Aorta (tissue), 5 donors: ENCODE measurements at regions of chr5 and their contacts with region 1.

Region 1: DNA sequence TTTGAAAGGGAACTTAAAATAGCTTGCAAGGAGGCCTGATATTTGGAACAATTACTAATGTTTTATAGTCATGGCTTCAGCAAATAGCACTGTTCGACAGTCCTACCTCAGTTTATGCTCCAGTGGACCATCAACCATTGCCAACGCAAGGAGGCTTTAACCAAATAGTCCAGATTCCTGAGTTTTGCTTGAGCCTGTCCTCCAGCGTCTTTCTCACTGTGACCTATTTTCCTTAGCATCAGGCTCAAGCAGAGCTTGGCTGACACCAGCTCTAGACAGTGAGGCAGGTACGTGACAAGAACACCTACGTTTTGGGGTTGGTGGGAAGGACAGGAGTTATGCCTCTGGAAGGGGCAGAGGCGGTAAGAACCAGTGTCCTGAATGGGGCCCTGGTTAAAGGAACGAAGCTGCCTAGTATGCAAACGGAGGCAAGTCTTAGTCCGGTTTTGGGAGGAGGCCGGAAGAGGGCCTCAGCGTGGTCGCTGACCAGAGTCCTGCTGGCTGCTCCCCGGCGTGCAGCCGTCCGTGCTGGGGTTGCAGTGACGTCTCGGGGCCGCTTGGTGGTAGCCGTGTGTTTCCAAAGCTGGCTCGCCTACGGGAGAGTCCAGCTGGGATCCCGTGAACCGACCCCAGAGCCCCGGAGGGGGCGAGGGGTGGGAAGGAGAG is 998 bp upstream of the FGF18 start:
- DNase-seq: peak; percentile 87 to 94
- ATAC-seq: peak; percentile 93
- H3K4me3 ChIP-seq: no peak overlapping the region
- H3K27ac ChIP-seq: no peak overlapping the region
- H3K4me1 ChIP-seq: no peaks in the 10 kb centered on the region
- H3K27me3 ChIP-seq: no peaks in the 10 kb centered on the region

Region 2: GRCh38 chr5:171595801-171596231 is 177.4 kb after region 1 on chr5:
- intact Hi-C with region 1: loop called (anchors 2 to 10 kb)
- DNase-seq: no peak
- ATAC-seq: no peak
- H3K4me3 ChIP-seq: no peak overlapping the region
- H3K27ac ChIP-seq: no peak overlapping the region
- H3K4me1 ChIP-seq: no peaks in the 10 kb centered on the region
- H3K27me3 ChIP-seq: no peaks in the 10 kb centered on the region

Region 3: DNA sequence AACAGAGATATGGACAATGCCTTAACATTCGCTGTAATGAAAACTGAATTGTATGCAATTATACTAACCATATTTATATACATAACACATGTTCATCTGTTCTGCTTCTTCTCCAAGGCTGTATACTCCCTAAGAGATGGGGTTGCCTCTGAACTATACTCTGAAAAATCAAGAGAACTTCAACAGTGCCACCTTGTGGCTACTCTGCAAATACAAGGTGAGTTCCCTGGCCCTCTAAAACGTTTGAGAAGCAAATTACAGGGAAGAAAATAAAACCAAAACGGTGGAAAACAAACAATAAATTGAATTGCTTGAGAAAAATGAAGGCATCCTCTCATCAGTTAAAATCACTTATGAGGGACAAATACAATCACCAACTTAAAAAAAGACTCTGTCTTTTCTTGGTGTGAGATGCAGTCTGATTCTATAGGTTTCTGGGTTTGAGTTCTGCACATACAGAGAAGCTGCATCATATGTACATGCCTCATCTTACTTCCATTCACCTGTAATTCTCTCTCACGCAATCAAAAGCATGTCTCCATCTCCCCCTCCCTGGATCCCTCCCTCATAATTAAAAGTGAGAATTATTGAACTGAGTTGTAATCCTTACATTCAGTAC is 489.4 kb after region 1 on chr5:
- intact Hi-C with region 1: loop called (anchors 2 to 5 kb)
- DNase-seq: no peak
- ATAC-seq: peak; percentile 72
- H3K4me3 ChIP-seq: no peak overlapping the region
- H3K27ac ChIP-seq: no peak overlapping the region
- H3K4me1 ChIP-seq: peaks cover 0 to 1% of the 10 kb centered on the region in 2 donors
- H3K27me3 ChIP-seq: no peaks in the 10 kb centered on the region

Region 4: GRCh38 chr5:172044631-172045314 is 626.3 kb after region 1 on chr5:
- intact Hi-C with region 1: loop called in 1 of 2 experiments (anchors 10 kb)
- DNase-seq: no peak
- ATAC-seq: no peak
- H3K4me3 ChIP-seq: no peak overlapping the region
- H3K27ac ChIP-seq: no peak overlapping the region
- H3K4me1 ChIP-seq: no peaks in the 10 kb centered on the region
- H3K27me3 ChIP-seq: no peaks in the 10 kb centered on the region